B cell (primary cell): ENCODE measurements at regions of chr10 and their contacts with region 1.

Region 1: DNA sequence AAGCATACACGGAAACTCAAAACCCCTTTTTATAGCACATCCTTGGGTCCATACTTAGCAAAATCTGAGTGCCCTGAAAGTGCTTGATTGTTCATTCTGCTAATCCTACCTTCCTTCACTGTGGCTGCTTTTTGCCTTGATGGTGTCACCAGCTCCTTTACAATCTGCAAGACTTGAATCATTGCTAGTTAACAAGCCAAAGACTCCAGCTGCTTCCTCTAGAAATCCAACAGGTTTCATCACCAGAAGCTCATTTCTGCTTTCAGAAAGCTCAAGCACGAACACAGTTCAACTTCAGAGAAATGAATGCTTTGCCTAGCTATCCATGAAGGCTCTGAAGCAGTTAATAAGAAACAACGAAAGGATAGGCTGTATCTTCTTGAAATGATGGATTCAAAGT is 38.0 kb downstream of the USP6NL start:
- DNase-seq: peak; percentile 55
- ATAC-seq: peak; percentile 43
- H3K4me3 ChIP-seq: peak overlapping the region in 2 of 5 experiments; percentile 5 to 20
- H3K4me3 Mint-ChIP-seq: peak overlapping the region; percentile 76
- H3K27ac ChIP-seq: peak overlapping the region; percentile 26 to 68
- H3K27ac Mint-ChIP-seq: peak overlapping the region; percentile 86
- H3K4me1 ChIP-seq: peaks cover 60 to 65% of the 10 kb centered on the region in 2 donors
- H3K4me1 Mint-ChIP-seq: peaks cover 73% of the 10 kb centered on the region
- H3K27me3 ChIP-seq: no peaks in the 10 kb centered on the region
- H3K27me3 Mint-ChIP-seq: no peaks in the 10 kb centered on the region
- CTCF ChIP-seq: no peak

Region 2: GRCh38 chr10:11533328-11533781 is 40.1 kb before region 1 on chr10:
- CTCF ChIA-PET with region 1: interaction called, 5 read pairs
- POLR2A ChIA-PET with region 1: no interaction called
- intact Hi-C with region 1: loop called (anchors 2 kb)
- DNase-seq: peak; percentile 37
- ATAC-seq: no peak
- H3K4me3 ChIP-seq: no peak overlapping the region
- H3K4me3 Mint-ChIP-seq: peak overlapping the region; percentile 80
- H3K27ac ChIP-seq: peak overlapping the region; percentile 14 to 68
- H3K27ac Mint-ChIP-seq: peak overlapping the region; percentile 94
- H3K4me1 ChIP-seq: peaks cover 62 to 66% of the 10 kb centered on the region in 2 donors
- H3K4me1 Mint-ChIP-seq: peaks cover 89% of the 10 kb centered on the region
- H3K27me3 ChIP-seq: no peaks in the 10 kb centered on the region
- H3K27me3 Mint-ChIP-seq: no peaks in the 10 kb centered on the region
- CTCF ChIP-seq: peak; percentile 22

Region 3: GRCh38 chr10:11560076-11560709 is 13.3 kb before region 1 on chr10:
- CTCF ChIA-PET with region 1: interaction called, 6 read pairs
- POLR2A ChIA-PET with region 1: interaction called, 4 read pairs
- intact Hi-C with region 1: loop called (anchors 1 kb)
- DNase-seq: peak; percentile 80
- ATAC-seq: peak; percentile 83
- H3K4me3 ChIP-seq: peak overlapping the region in 4 of 5 experiments; percentile 2 to 25 (median 10)
- H3K4me3 Mint-ChIP-seq: peak overlapping the region; percentile 73
- H3K27ac ChIP-seq: peak overlapping the region; percentile 87 to 93
- H3K27ac Mint-ChIP-seq: peak overlapping the region; percentile 95
- H3K4me1 ChIP-seq: peaks cover 53 to 78% of the 10 kb centered on the region in 2 donors
- H3K4me1 Mint-ChIP-seq: peaks cover 81% of the 10 kb centered on the region
- H3K27me3 ChIP-seq: no peaks in the 10 kb centered on the region
- H3K27me3 Mint-ChIP-seq: no peaks in the 10 kb centered on the region
- CTCF ChIP-seq: no peak

Region 4: DNA sequence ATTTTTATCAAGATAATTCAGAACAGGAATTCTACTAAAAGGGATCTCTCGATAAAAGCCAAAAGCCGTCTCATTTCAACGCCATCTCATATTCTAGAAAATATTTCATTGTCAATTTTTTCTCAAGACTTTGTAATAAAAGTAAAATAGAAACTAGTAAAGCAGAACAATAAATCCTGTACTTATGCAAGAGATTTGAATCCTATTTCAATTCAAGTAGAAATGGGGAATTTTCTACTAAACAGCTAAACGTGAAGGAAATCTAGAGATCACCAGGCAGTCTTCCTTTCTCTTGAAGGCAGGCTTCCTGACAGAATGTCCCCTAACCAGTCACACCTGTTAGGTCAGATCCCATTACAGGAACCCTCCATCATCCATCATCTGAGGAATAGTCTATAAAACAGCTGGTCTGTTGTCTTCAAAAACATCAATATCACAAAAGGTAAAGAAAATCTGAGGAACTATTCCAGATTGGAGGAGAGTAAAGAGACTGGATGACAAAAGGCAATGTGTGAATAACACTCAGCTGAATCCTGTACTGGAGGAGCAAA is 14.3 kb after region 1 on chr10:
- CTCF ChIA-PET with region 1: interaction called, 6 read pairs
- POLR2A ChIA-PET with region 1: no interaction called
- intact Hi-C with region 1: loop called (anchors 2 kb)
- DNase-seq: no peak
- ATAC-seq: no peak
- H3K4me3 ChIP-seq: no peak overlapping the region
- H3K4me3 Mint-ChIP-seq: no peak overlapping the region
- H3K27ac ChIP-seq: peak overlapping the region in 1 of 2 donors; percentile 40
- H3K27ac Mint-ChIP-seq: peak overlapping the region; percentile 16
- H3K4me1 ChIP-seq: peaks cover 21 to 42% of the 10 kb centered on the region in 2 donors
- H3K4me1 Mint-ChIP-seq: peaks cover 55% of the 10 kb centered on the region
- H3K27me3 ChIP-seq: no peaks in the 10 kb centered on the region
- H3K27me3 Mint-ChIP-seq: no peaks in the 10 kb centered on the region
- CTCF ChIP-seq: no peak

Region 5: DNA sequence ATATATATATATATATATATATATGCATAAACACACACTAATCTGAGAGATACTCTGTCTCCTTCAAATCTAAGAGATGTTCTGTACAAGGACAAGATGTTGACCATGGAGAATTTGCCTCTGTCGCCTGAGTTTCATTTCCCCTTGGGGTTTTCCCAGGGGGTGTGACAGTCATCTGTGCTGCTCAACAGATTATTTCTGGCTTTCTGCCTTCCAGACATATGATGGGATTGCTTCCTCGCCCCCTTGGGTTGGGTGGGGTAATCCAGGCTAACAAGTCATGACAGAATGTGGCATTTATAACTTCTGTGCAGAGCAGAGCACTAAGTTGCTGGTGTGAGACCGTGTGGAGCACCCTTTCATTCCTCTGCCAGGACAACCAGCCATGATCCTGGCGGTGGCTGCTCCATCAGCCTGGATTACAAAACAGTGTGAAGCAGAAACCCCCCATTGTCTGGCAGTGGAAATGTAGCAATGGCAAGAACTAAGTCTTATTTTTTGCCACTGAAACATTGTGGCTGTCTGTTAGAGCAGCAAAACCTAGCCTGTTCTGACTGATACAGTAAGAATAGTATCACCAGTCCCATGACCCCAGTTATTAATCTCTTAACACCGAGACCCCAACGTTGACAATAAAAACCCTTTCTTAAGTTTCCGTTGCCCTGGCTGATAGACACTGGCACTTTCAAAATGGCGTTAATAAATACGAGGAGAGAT is 51.7 kb after region 1 on chr10:
- CTCF ChIA-PET with region 1: no interaction called
- POLR2A ChIA-PET with region 1: no interaction called
- intact Hi-C with region 1: no loop called
- DNase-seq: peak; percentile 89
- ATAC-seq: peak; percentile 94
- H3K4me3 ChIP-seq: peak overlapping the region in 2 of 5 experiments; percentile 26 to 35
- H3K4me3 Mint-ChIP-seq: peak overlapping the region; percentile 76
- H3K27ac ChIP-seq: peak overlapping the region; percentile 75 to 78
- H3K27ac Mint-ChIP-seq: peak overlapping the region; percentile 92
- H3K4me1 ChIP-seq: peaks cover 27 to 28% of the 10 kb centered on the region in 2 donors
- H3K4me1 Mint-ChIP-seq: peaks cover 50% of the 10 kb centered on the region
- H3K27me3 ChIP-seq: no peaks in the 10 kb centered on the region
- H3K27me3 Mint-ChIP-seq: no peaks in the 10 kb centered on the region
- CTCF ChIP-seq: no peak